GM10248 (cell line): ENCODE measurements at regions of chr16 and their contacts with region 1.

Region 1: GRCh38 chr16:58000706-58001676 is at the start of gene USB1:
- DNase-seq: peak; percentile 98
- CTCF ChIP-seq: peak; percentile 86

Region 2: DNA sequence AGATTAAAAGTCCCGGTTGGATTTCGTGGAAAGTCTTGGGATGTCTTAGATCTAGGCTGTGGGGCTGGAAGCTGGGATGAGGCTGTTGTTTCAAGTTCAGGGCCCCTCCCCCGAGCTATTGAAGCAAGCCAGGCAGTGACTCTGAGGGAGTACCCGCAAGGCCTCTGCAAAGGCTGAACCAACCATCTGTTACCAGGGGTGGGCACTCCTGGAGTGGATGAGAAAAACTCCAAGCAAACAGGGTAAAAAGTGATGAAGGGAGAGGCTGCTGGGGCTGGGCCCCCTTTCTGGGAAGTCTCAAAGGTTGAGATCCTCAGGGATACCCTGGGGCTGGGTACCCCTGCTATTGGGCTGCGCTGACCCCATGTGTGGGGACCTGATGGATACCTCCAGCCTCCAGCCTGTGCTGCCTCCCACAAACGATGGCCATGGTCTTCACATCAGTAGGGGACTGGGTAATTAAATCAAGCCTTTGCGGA is 116.3 kb before region 1 on chr16:
- CTCF ChIA-PET with region 1: no interaction called
- POLR2A ChIA-PET with region 1: no interaction called
- DNase-seq: no peak
- CTCF ChIP-seq: no peak

Region 3: GRCh38 chr16:57899771-57900661 is 101.0 kb before region 1 on chr16:
- CTCF ChIA-PET with region 1: interaction called, 14 read pairs
- POLR2A ChIA-PET with region 1: no interaction called
- DNase-seq: peak; percentile 71
- CTCF ChIP-seq: peak; percentile 77

Region 4: DNA sequence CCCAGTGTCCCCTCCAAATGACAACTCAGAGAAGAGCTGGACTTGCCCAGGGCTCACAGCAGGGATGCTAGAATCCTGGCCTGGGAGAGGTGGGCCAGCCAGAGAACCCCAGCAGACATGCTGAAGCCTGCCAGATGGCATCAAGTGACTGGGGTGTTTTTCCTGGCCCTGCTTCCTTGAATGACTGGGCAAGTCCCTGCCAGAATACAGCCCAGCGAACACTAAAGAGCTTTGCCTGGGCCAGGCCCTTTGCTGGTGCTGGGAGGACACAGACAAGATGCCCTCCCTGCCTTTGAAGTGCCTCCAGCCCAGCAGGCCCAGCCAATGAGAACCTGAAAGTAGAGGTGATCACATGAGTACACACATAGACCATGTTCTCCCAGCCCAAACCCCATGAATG is 12.1 kb before region 1 on chr16:
- CTCF ChIA-PET with region 1: interaction called, 16 read pairs
- POLR2A ChIA-PET with region 1: no interaction called
- DNase-seq: no peak
- CTCF ChIP-seq: no peak